CD4-positive, alpha-beta T cell (primary cell): ENCODE measurements at regions of chr7 and their contacts with region 1.

Region 1: GRCh38 chr7:47100817-47101435 is 481.0 kb downstream of the TNS3 start:
- DNase-seq: no peak
- ATAC-seq: no peak
- H3K4me3 ChIP-seq: no peak overlapping the region
- H3K4me3 Mint-ChIP-seq: no peak overlapping the region
- H3K27ac ChIP-seq: no peak overlapping the region
- H3K27ac Mint-ChIP-seq: no peak overlapping the region
- H3K4me1 ChIP-seq: no peaks in the 10 kb centered on the region
- H3K4me1 Mint-ChIP-seq: no peaks in the 10 kb centered on the region
- H3K27me3 ChIP-seq: no peaks in the 10 kb centered on the region
- H3K27me3 Mint-ChIP-seq: no peaks in the 10 kb centered on the region
- CTCF ChIP-seq: no peak

Region 2: DNA sequence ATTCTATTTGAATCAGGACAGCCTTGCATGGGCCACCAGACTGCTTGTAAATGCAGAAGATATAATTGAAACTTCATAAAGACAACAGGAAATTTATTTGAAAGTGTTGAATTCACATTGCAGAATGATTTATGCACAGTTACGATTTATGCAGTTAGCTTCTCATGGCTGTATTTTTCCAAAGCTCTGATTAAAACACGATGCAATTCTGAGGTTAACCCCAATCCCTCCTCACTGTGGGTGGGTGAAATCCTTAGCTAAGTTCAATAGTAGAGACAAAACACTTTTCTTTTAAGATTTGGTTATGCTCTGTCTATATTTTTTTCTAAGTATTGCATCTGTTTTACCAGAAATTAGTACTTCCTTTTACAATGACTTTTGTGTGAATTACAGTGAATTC is 451.1 kb before region 1 on chr7:
- CTCF ChIA-PET with region 1: no interaction called
- POLR2A ChIA-PET with region 1: no interaction called
- intact Hi-C with region 1: loop called in 1 of 2 experiments (anchors 10 kb)
- DNase-seq: no peak
- ATAC-seq: no peak
- H3K4me3 ChIP-seq: no peak overlapping the region
- H3K4me3 Mint-ChIP-seq: no peak overlapping the region
- H3K27ac ChIP-seq: no peak overlapping the region
- H3K27ac Mint-ChIP-seq: no peak overlapping the region
- H3K4me1 ChIP-seq: no peaks in the 10 kb centered on the region
- H3K4me1 Mint-ChIP-seq: no peaks in the 10 kb centered on the region
- H3K27me3 ChIP-seq: no peaks in the 10 kb centered on the region
- H3K27me3 Mint-ChIP-seq: no peaks in the 10 kb centered on the region
- CTCF ChIP-seq: no peak

Region 3: GRCh38 chr7:47088329-47089067 is 12.4 kb before region 1 on chr7:
- CTCF ChIA-PET with region 1: no interaction called
- POLR2A ChIA-PET with region 1: no interaction called
- intact Hi-C with region 1: no loop called
- DNase-seq: peak in 4 of 14 experiments; percentile 14 to 45 (median 36)
- ATAC-seq: no peak
- H3K4me3 ChIP-seq: no peak overlapping the region
- H3K4me3 Mint-ChIP-seq: no peak overlapping the region
- H3K27ac ChIP-seq: no peak overlapping the region
- H3K27ac Mint-ChIP-seq: no peak overlapping the region
- H3K4me1 ChIP-seq: peaks cover 3% of the 10 kb centered on the region
- H3K4me1 Mint-ChIP-seq: no peaks in the 10 kb centered on the region
- H3K27me3 ChIP-seq: peaks cover 0 to 4% of the 10 kb centered on the region in 2 experiments
- H3K27me3 Mint-ChIP-seq: peaks cover 11% of the 10 kb centered on the region
- CTCF ChIP-seq: peak; percentile 68

Region 4: GRCh38 chr7:47170516-47170915 is 69.6 kb after region 1 on chr7:
- CTCF ChIA-PET with region 1: no interaction called
- POLR2A ChIA-PET with region 1: no interaction called
- intact Hi-C with region 1: no loop called
- DNase-seq: no peak
- ATAC-seq: no peak
- H3K4me3 ChIP-seq: no peak overlapping the region
- H3K4me3 Mint-ChIP-seq: no peak overlapping the region
- H3K27ac ChIP-seq: no peak overlapping the region
- H3K27ac Mint-ChIP-seq: no peak overlapping the region
- H3K4me1 ChIP-seq: no peaks in the 10 kb centered on the region
- H3K4me1 Mint-ChIP-seq: no peaks in the 10 kb centered on the region
- H3K27me3 ChIP-seq: no peaks in the 10 kb centered on the region
- H3K27me3 Mint-ChIP-seq: no peaks in the 10 kb centered on the region
- CTCF ChIP-seq: no peak